Endothelial cell of umbilical vein (primary cell): ENCODE measurements at regions of chr16 and their contacts with region 1.

Region 1: DNA sequence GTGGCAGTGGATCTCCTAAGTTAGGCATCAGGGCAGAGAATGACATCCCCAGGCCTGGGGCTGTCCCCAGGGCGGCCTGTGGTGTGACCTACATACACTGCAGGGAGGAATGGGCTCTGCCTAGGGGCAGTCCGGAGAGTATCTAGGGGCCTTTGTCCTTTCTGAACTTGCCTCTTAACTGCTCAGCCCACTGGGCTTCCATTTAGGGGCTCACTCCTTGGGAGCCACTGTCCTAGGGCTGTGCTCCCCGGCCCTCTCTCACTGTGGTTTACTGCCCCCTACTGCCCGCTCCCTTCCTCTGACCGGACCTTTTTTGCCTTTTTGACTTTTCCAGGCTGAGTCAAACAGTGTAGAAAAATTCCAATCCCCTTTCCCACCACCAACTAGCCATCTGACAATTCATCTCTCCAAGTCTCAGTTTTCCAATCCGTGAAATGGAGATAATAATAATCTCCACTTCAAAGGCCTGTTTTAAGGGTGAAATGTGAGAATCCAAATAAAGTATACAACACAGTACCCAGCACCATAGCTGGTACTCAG is 66.8 kb downstream of the DNAH3 start:
- DNase-seq: peak; percentile 66
- H3K4me3 ChIP-seq: no peak overlapping the region
- H3K27ac ChIP-seq: no peak overlapping the region
- H3K4me1 ChIP-seq: no peaks in the 10 kb centered on the region
- H3K27me3 ChIP-seq: peaks cover 0 to 2% of the 10 kb centered on the region in 2 experiments
- CTCF ChIP-seq: peak; percentile 71 to 83
- POLR2A ChIP-seq: no peak

Region 2: DNA sequence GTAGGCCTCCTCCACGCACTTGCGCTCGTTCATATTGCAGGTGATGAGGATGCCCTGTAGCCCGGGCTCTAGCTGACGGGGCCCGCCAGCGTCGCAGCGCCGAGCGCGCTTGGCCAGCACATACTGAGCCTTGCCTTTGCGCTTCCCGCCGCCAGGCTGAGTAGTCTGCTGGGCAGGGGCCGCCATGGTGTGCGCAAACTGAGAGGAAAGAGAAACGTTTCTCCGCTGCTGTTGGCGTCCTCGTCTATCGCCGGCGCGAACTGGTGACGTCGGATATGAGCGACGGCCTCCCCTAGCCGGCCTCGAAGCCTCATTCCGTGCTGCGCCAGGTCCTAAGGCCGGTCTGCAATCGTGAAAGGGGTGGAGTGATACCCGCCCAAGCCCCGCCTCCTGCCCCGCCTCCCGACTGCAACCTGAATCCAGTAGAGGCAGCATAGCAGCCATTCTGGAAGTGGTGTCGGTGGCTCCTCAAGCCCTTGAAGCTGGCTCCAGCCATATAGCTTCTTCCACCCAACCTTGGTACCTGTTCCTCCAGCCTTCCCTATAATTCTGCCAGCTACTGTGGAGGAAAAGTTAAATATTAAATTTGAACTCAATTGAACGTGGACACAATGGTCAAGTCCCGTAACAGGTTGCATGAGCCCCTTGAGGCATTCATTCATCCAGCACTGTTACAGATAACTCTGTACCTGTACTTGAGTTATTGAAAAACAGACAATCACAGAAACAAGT is 342.1 kb before region 1 on chr16 and contains the start of gene THUMPD1:
- CTCF ChIA-PET with region 1: no interaction called
- POLR2A ChIA-PET with region 1: no interaction called
- dilution Hi-C with region 1: no loop called
- intact Hi-C with region 1: loop called (anchors 1 kb)
- DNase-seq: peak; percentile 95
- H3K4me3 ChIP-seq: peak within 1 kb of the TSS; percentile 66 to 98 (median 91)
- H3K27ac ChIP-seq: peak within 1 kb of the TSS; percentile 74
- H3K4me1 ChIP-seq: peaks cover 10% of the 10 kb centered on the region
- H3K27me3 ChIP-seq: no peaks in the 10 kb centered on the region
- CTCF ChIP-seq: peak; percentile 9 to 25
- POLR2A ChIP-seq: peak; percentile 69
- total RNA-seq, gene THUMPD1: 29.0 and 30.7 TPM in 2 replicates

Region 3: GRCh38 chr16:20799599-20799998 is 284.2 kb before region 1 on chr16:
- CTCF ChIA-PET with region 1: interaction called, 4 read pairs
- POLR2A ChIA-PET with region 1: no interaction called
- dilution Hi-C with region 1: no loop called
- intact Hi-C with region 1: loop called (anchors 2 kb)
- DNase-seq: peak; percentile 46
- H3K4me3 ChIP-seq: no peak overlapping the region
- H3K27ac ChIP-seq: no peak overlapping the region
- H3K4me1 ChIP-seq: peaks cover 8% of the 10 kb centered on the region
- H3K27me3 ChIP-seq: no peaks in the 10 kb centered on the region
- CTCF ChIP-seq: peak; percentile 20 to 33
- POLR2A ChIP-seq: no peak

Region 4: DNA sequence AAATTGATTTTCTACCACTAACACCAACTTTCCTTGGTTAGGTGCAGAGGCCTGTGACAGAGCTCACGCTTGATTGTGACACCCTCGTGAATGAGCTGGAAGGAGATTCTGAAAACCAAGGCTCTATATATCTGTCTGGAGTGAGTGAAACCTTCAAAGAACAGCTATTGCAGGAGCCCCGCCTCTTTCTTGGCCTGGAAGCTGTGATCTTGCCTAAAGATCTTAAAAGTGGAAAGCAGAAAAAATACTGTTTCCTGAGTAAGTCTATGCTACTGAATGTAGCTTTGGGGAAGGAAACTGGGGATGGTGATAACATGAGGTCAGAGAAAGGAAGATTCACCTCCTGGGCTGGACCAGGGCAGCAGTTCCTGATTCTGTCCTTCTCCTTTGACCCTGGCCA is 239.2 kb before region 1 on chr16:
- CTCF ChIA-PET with region 1: interaction called, 19 read pairs
- POLR2A ChIA-PET with region 1: no interaction called
- dilution Hi-C with region 1: no loop called
- intact Hi-C with region 1: no loop called
- DNase-seq: peak; percentile 65
- H3K4me3 ChIP-seq: no peak overlapping the region
- H3K27ac ChIP-seq: no peak overlapping the region
- H3K4me1 ChIP-seq: peaks cover 6% of the 10 kb centered on the region
- H3K27me3 ChIP-seq: no peaks in the 10 kb centered on the region
- CTCF ChIP-seq: no peak
- POLR2A ChIP-seq: no peak

Region 5: GRCh38 chr16:20900299-20901067 is 183.3 kb before region 1 on chr16 and contains the starts of genes DCUN1D3 and LYRM1:
- CTCF ChIA-PET with region 1: interaction called, 3 read pairs
- POLR2A ChIA-PET with region 1: no interaction called
- dilution Hi-C with region 1: no loop called
- intact Hi-C with region 1: loop called (anchors 2 kb)
- DNase-seq: peak; percentile 99
- H3K4me3 ChIP-seq: peak within 1 kb of the TSS; percentile 56 to 96 (median 83)
- H3K27ac ChIP-seq: peak within 1 kb of the TSS; percentile 100
- H3K4me1 ChIP-seq: peaks cover 58% of the 10 kb centered on the region
- H3K27me3 ChIP-seq: no peaks in the 10 kb centered on the region
- CTCF ChIP-seq: no peak
- POLR2A ChIP-seq: peak; percentile 78
- total RNA-seq, gene DCUN1D3: 35.0 and 39.6 TPM in 2 replicates
- total RNA-seq, gene LYRM1: 28.4 and 29.1 TPM in 2 replicates